Activated CD4-positive, alpha-beta T cell treated with anti-CD3 and anti-CD28 coated beads for 36 hours (primary cell): ENCODE measurements at regions of chr3 and their contacts with region 1.

Region 1: DNA sequence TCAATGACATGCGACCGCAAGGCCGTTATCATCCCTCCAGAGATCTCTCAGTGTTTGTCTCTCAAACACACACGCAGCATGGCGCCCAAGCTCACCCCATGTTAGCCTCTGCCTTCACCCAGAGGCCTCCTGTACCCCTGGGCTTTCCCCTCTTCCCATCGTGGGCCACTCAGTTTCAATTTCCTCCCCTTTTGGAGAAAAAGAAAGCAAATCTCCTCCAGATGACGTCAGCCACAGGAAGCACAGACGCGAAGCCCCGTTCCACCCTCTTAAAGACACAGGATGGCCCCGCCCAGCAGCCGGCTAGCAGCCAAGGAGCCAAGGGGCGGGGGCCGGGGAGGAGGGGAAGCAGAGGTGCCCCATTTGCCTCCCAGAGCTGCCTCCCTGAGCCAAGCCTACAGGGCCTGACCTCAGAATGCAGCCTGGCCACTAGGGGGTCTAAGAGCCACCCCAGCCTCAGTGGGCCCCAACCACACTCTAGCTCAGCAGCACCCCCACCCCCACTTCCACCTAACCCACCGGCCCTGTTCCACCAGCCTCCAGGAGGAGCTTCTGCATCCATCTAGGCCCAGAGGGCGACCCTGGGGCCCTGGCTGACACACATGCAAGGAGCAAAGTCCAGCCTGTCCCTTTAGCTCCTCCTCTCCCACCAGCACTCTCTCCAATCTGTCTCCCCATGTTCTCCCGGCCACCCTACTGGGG is 26.5 kb downstream of the ATRIP start:
- DNase-seq: peak; percentile 99
- ATAC-seq: peak; percentile 90
- H3K4me3 Mint-ChIP-seq: peak overlapping the region; percentile 74
- H3K27ac Mint-ChIP-seq: peak overlapping the region; percentile 93
- H3K4me1 Mint-ChIP-seq: peaks cover 49% of the 10 kb centered on the region
- H3K27me3 Mint-ChIP-seq: no peaks in the 10 kb centered on the region

Region 2: DNA sequence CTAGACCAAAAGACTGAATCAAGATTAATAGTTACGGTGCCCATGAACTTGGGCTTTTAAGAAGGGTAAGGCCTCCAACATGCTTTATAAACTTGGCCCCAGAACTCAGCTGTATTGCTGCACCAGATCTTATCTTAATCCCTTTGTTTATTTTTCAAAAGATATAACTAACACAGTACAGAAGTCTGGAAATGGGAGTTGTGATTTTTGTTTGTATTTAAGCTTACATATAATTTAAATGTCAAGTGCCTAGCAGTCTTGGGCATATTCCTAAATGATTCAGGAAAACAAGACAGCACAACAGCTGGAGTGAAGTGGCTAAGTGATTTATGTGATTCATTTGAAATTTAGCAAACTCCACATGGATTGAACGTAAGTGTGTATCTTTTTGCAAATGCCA is 1437.4 kb before region 1 on chr3:
- CTCF ChIA-PET with region 1: no interaction called
- POLR2A ChIA-PET with region 1: no interaction called
- intact Hi-C with region 1: no loop called
- DNase-seq: no peak
- ATAC-seq: no peak
- H3K4me3 Mint-ChIP-seq: no peak overlapping the region
- H3K27ac Mint-ChIP-seq: no peak overlapping the region
- H3K4me1 Mint-ChIP-seq: peaks cover 41% of the 10 kb centered on the region
- H3K27me3 Mint-ChIP-seq: no peaks in the 10 kb centered on the region

Region 3: DNA sequence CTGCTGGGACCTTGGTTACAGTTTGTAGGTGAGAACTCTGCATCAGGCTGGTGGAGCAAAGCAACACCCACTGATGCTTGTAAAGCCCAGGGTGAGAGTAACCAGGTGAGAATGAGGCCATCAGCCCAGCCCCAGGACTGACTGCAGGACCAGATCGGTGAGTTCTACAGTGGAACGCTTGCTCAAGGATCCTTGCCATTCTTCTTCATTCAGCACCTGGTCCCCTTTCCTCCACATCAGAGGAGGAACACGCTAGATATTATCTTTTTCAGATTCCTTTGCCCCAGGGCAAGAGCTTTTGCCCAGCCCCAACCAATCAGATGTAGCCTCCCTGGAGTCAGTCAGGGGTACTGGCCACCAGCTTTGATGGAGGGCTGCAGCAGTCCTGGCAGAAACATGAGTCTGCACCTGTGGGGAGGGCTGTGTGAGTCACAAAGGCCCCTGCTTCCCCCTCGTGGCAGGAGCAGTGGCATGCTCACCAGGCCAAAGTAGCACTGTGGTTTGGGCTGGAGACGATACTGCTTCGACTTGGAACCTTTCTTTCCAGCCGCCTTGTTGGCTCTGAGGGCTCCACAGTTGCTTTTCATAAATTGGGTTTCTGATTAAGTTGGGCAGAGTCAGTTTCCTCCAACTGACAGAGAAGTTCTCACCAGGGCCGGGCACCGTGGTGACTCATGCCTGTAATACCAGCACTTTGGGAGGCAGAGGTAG is 34.4 kb after region 1 on chr3:
- CTCF ChIA-PET with region 1: interaction called, 3 read pairs
- POLR2A ChIA-PET with region 1: no interaction called
- intact Hi-C with region 1: loop called (anchors 1 to 2 kb)
- DNase-seq: peak; percentile 83
- ATAC-seq: peak; percentile 82
- H3K4me3 Mint-ChIP-seq: peak overlapping the region; percentile 28
- H3K27ac Mint-ChIP-seq: peak overlapping the region; percentile 80
- H3K4me1 Mint-ChIP-seq: peaks cover 45% of the 10 kb centered on the region
- H3K27me3 Mint-ChIP-seq: no peaks in the 10 kb centered on the region

Region 4: GRCh38 chr3:48635222-48636021 is 162.4 kb after region 1 on chr3 and contains the start of gene SLC26A6:
- CTCF ChIA-PET with region 1: interaction called, 4 read pairs
- POLR2A ChIA-PET with region 1: no interaction called
- intact Hi-C with region 1: loop called in 1 of 2 experiments (anchors 1 kb)
- DNase-seq: peak; percentile 97
- ATAC-seq: peak; percentile 97
- H3K4me3 Mint-ChIP-seq: peak within 1 kb of the TSS; percentile 84
- H3K27ac Mint-ChIP-seq: peak within 1 kb of the TSS; percentile 76
- H3K4me1 Mint-ChIP-seq: peaks cover 13% of the 10 kb centered on the region
- H3K27me3 Mint-ChIP-seq: no peaks in the 10 kb centered on the region
- total RNA-seq, gene SLC26A6: 35.0 to 38.5 TPM